ENCODE measurements at regions of chr3 and their contacts with region 1.

Region 1: DNA sequence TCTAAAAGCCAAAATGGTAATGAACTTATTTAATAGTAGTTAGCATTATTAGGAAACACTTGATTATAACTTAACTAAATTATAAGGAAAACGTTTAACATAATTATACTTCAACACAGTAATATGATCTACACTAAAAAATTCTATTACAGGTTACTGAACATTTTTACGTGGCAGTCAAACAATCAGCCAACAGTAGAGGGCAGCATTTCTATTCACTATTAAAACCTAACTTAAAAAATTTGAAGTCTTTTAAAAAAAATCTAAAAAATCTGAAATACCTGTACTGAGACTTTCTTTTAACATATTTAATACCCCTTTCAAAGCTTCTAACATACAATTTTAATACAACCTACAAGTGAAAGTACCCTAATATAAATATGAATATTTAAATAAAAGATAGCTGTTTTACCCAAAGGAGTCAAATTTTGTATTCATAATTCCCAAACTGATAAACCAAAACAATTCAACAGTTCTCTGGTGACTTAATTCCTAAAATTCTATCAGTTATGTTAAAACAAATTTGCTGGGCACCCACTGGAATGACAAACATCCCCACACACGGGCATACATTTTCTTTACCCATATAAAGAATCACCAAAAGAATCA is 41.5 kb downstream of the DLG1 start:
- DNase-seq: peak; percentile 5
- H3K4me3 ChIP-seq: no peak overlapping the region
- H3K27ac ChIP-seq: peak overlapping the region in 1 of 2 experiments; percentile 28; a peak in 2 of 4 replicates
- H3K4me1 ChIP-seq: peaks cover 2 to 6% of the 10 kb centered on the region in 2 experiments; a peak in 3 of 4 replicates
- H3K27me3 ChIP-seq: no peaks in the 10 kb centered on the region
- CTCF ChIP-seq: peak; percentile 90
- EP300 ChIP-seq: no peak
- RAD21 ChIP-seq: peak; percentile 79

Region 2: DNA sequence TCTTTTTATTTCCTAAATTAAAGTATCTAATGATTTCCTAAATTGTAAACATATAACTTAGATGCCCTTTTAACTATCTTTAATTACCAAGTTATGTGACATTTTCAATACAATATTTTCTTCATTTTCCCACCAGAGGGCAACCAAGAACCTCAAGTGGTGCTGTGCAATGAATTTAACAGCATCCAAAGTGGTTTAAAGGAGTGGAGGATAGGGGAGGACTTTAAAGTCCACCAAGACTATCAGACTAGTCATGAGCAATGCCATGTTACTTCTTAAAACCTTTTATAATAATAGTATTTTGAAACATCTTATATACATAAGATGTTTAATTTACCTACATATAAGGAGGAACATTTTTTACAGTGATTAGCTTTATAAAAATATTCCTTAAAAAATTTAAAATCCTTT is 32.9 kb before region 1 on chr3:
- CTCF ChIA-PET with region 1: interaction called, 18 read pairs
- POLR2A ChIA-PET with region 1: no interaction called
- DNase-seq: peak; percentile 68
- H3K4me3 ChIP-seq: no peak overlapping the region
- H3K27ac ChIP-seq: no peak overlapping the region
- H3K4me1 ChIP-seq: peaks cover 0 to 14% of the 10 kb centered on the region in 2 experiments; a peak in 2 of 4 replicates
- H3K27me3 ChIP-seq: no peaks in the 10 kb centered on the region
- CTCF ChIP-seq: peak; percentile 75
- EP300 ChIP-seq: no peak
- RAD21 ChIP-seq: peak; percentile 84

Region 3: GRCh38 chr3:197242784-197243432 is 14.0 kb before region 1 on chr3:
- CTCF ChIA-PET with region 1: interaction called, 33 read pairs
- POLR2A ChIA-PET with region 1: no interaction called
- DNase-seq: no peak
- H3K4me3 ChIP-seq: no peak overlapping the region
- H3K27ac ChIP-seq: no peak overlapping the region
- H3K4me1 ChIP-seq: no peaks in the 10 kb centered on the region
- H3K27me3 ChIP-seq: no peaks in the 10 kb centered on the region
- CTCF ChIP-seq: no peak
- EP300 ChIP-seq: no peak
- RAD21 ChIP-seq: no peak

Region 4: DNA sequence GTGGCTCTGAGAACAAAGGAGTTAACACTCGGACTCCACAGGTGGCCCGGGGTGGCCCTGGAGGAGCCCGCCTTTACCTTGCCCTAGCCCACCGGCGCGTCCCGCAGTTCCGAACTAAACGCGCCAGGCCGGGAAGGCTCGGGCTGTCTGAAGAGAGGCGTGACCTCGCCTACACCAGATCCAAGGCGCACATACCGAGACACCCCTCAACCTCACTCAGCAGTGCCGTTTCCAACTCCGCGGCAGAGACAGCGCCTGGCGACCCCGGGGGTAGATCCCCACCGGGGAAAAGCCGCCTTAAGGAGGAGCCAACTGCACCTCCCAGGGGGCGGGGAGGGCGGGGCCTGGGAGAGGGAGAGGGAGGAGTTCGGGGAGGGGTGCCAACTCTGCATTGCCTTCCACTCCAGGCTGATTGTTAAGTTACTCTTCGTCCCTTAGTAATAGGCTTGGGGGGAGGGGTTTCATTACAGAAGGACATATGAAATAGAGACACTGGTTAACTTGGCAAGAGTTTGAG is 41.5 kb after region 1 on chr3 and contains the start of gene DLG1:
- CTCF ChIA-PET with region 1: interaction called, 28 read pairs
- POLR2A ChIA-PET with region 1: no interaction called
- DNase-seq: peak; percentile 94
- H3K4me3 ChIP-seq: peak within 1 kb of the TSS; percentile 93 to 96
- H3K27ac ChIP-seq: peak within 1 kb of the TSS; percentile 86 to 94
- H3K4me1 ChIP-seq: peaks cover 4 to 9% of the 10 kb centered on the region in 2 experiments; a peak in 3 of 4 replicates
- H3K27me3 ChIP-seq: no peaks in the 10 kb centered on the region
- CTCF ChIP-seq: no peak
- EP300 ChIP-seq: no peak
- RAD21 ChIP-seq: peak; percentile 14; the same call in 1 of the 2 replicates
- polyA plus RNA-seq, gene DLG1: 16.5 and 21.0 TPM in 2 replicates

Region 5: GRCh38 chr3:197432384-197433127 is 175.6 kb after region 1 on chr3:
- CTCF ChIA-PET with region 1: interaction called, 10 read pairs
- POLR2A ChIA-PET with region 1: no interaction called
- DNase-seq: peak; percentile 49
- H3K4me3 ChIP-seq: no peak overlapping the region
- H3K27ac ChIP-seq: peak overlapping the region; percentile 12 to 94; a peak in 3 of 4 replicates
- H3K4me1 ChIP-seq: peaks cover 30 to 35% of the 10 kb centered on the region in 2 experiments
- H3K27me3 ChIP-seq: no peaks in the 10 kb centered on the region
- CTCF ChIP-seq: no peak
- EP300 ChIP-seq: peak in 1 of 2 experiments; percentile 86; a peak in 2 of 4 replicates
- RAD21 ChIP-seq: peak; percentile 9; the same call in 1 of the 2 replicates

Region 6: GRCh38 chr3:197501879-197502620 is 245.1 kb after region 1 on chr3:
- CTCF ChIA-PET with region 1: interaction called, 110 read pairs
- POLR2A ChIA-PET with region 1: no interaction called
- DNase-seq: peak; percentile 68
- H3K4me3 ChIP-seq: no peak overlapping the region; a peak in 1 of 4 replicates
- H3K27ac ChIP-seq: peak overlapping the region in 1 of 2 experiments; percentile 29; a peak in 1 of 4 replicates
- H3K4me1 ChIP-seq: peaks cover 0 to 45% of the 10 kb centered on the region in 2 experiments; a peak in 2 of 4 replicates
- H3K27me3 ChIP-seq: no peaks in the 10 kb centered on the region
- CTCF ChIP-seq: peak; percentile 61
- EP300 ChIP-seq: no peak
- RAD21 ChIP-seq: peak; percentile 73

Region 7: DNA sequence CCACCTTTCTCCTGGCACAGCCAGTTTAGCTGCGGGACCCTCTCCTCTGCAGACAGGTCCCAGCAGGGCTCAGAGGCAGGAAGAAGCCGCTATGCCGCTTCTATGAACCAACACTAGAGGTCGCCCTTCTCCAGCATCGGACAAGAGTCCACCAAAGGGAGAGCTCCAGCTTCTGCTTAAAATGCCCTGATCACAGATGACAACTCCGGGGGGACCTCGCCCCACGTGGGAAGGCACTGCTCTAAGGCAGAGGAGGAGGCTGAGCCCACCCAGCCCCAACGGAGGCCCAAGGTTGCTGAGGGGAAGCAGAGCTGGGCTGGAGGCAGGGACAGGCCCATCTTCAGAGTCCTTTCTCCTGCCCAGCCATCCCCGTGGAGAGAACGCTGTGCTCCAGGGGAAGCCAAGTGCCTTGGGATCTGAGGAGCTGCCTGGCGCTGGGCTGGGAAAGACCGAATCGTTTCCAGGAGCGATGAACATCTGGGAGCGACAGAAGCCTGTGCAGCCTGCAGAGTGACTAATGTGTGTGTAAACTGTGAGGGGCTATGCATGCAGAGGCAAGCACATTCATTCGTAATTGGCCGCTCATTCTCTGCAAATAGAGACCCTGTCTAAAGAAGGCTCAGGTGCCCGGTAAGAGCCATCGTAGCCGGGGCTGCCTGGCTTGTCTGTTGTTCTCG is 342.3 kb after region 1 on chr3:
- CTCF ChIA-PET with region 1: interaction called, 11 read pairs
- POLR2A ChIA-PET with region 1: no interaction called
- DNase-seq: peak; percentile 89
- H3K4me3 ChIP-seq: peak overlapping the region; percentile 33 to 45
- H3K27ac ChIP-seq: no peak overlapping the region
- H3K4me1 ChIP-seq: peaks cover 0 to 7% of the 10 kb centered on the region in 2 experiments; a peak in 1 of 4 replicates
- H3K27me3 ChIP-seq: no peaks in the 10 kb centered on the region
- CTCF ChIP-seq: peak; percentile 94
- EP300 ChIP-seq: no peak
- RAD21 ChIP-seq: peak; percentile 91

Measured in SK-N-SH (cell line).